ENCODE measurements at regions of chr17 and their contacts with region 1.

Region 1: DNA sequence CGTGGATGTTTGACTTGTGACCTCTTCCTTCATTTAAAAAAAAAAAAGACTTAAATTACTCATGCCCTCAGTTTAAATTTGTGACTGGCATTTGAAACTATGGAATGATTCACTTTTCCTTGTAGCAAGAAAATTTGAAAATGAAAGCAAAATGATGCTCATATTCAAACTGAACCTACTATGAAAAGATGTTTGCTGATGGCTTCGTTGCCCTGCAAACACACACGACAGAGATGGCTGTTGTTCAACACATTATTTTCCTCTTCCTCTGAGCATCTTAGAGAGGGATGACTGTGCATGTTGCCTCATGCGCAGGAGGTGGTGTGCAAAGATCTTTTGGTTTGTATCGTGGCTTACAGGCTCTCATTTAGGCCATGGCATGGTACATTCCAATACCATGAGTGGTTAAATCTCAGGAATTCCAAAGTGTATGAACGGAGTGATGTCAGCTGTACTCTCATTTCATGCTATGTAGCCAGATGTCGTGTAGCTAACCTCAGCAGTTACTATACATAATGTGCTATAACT is 164.5 kb downstream of the PRKCA start:
- DNase-seq: peak; percentile 65
- H3K4me3 Mint-ChIP-seq: peak overlapping the region; percentile 66
- H3K27ac Mint-ChIP-seq: peak overlapping the region; percentile 96
- H3K4me1 Mint-ChIP-seq: peaks cover 53% of the 10 kb centered on the region
- H3K27me3 Mint-ChIP-seq: no peaks in the 10 kb centered on the region
- CTCF ChIP-seq: no peak

Region 2: DNA sequence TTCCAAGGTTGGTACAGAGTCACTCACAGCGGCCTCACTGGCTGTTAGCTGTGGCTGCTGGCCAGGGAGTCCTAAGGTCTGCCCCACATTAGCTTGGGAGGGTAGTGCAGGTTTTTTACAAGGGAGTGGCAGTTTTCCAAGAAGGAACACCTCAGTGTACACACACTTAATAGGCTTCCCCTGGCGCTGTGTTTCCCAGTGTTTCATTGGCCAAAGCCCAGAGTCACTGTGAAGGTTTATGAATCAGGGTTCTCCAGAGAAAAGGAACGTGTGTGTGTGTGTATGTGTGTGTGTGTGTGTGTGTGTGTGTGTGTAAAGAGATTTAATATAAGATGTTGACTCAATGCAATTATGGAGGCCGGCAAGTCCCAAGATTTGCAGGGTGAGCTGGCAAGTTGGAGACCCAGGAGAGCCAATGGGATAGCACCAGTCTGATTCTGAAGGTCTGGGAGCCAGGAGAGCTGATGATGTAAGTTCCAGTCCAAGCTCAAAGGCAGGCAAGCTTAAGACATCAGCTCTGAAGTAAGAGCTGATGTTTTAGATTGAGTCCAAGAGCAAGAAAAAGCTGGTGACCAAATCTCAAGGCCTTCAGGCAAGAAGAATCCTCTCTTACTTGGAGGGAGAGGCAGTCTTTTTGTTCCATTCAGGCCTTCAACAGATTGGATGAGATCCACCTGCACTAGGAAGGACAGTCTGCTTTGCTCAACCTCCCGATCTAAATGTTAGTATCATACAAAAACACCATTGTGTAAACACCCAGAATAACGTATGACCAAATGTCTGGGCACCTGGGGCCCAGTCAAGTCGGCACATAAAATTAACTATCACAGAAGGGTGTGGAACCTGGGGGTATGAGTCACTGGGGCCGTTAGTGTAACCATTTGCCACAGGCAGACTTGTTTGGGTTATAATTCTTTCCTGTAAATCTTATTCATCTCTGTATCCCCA is 42.3 kb after region 1 on chr17:
- CTCF ChIA-PET with region 1: interaction called, 4 read pairs
- intact Hi-C with region 1: loop called (anchors 5 kb)
- DNase-seq: peak; percentile 68
- H3K4me3 Mint-ChIP-seq: peak overlapping the region; percentile 50
- H3K27ac Mint-ChIP-seq: peak overlapping the region; percentile 79
- H3K4me1 Mint-ChIP-seq: peaks cover 47% of the 10 kb centered on the region
- H3K27me3 Mint-ChIP-seq: no peaks in the 10 kb centered on the region
- CTCF ChIP-seq: no peak

Region 3: GRCh38 chr17:66589892-66590291 is 123.0 kb after region 1 on chr17:
- CTCF ChIA-PET with region 1: no interaction called
- intact Hi-C with region 1: no loop called
- DNase-seq: no peak
- H3K4me3 Mint-ChIP-seq: no peak overlapping the region
- H3K27ac Mint-ChIP-seq: no peak overlapping the region
- H3K4me1 Mint-ChIP-seq: peaks cover 10% of the 10 kb centered on the region
- H3K27me3 Mint-ChIP-seq: no peaks in the 10 kb centered on the region
- CTCF ChIP-seq: no peak

Region 4: DNA sequence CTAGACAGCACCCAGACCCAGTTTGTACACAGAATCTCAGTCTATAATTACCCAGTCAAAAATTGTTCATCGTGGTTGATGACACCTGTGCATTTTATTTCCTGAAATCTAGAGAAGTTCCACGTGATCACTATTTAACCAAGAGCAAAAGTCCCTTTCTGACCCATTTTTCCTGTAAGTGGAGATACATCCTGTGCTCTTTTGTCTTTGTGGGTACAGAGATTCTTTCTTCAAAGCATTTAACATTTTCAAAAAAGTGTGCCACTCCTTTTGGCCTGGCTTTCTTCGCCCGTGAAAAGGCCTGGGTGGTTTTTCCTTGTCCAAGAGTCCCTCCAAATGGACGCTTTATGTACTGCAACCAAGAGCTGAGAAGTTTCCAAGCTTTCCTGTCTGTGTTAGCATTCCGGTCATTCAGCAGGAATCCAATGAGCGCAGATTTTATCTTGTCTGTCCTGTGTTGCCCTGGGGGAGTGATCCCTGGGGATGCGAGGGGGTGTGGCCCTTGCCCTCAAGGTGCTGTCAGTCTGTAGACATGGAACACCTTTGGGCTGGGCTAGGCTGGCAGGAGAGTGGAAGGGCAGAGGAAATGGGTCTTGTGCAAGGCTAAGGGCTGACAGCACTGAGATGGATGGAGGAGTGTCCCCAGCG is 206.9 kb after region 1 on chr17:
- CTCF ChIA-PET with region 1: no interaction called
- intact Hi-C with region 1: loop called (anchors 10 kb)
- DNase-seq: peak; percentile 57
- H3K4me3 Mint-ChIP-seq: no peak overlapping the region
- H3K27ac Mint-ChIP-seq: no peak overlapping the region
- H3K4me1 Mint-ChIP-seq: peaks cover 50% of the 10 kb centered on the region
- H3K27me3 Mint-ChIP-seq: no peaks in the 10 kb centered on the region
- CTCF ChIP-seq: peak; percentile 66